ENCODE measurements at regions of chr3 and their contacts with region 1.

Region 1: GRCh38 chr3:100400780-100401673 is at the starts of genes LNP1 and TOMM70:
- DNase-seq: peak; percentile 97
- H3K4me3 Mint-ChIP-seq: peak within 1 kb of the TSS; percentile 92
- H3K27ac Mint-ChIP-seq: peak within 1 kb of the TSS; percentile 94
- H3K4me1 Mint-ChIP-seq: peaks cover 62% of the 10 kb centered on the region
- H3K27me3 Mint-ChIP-seq: no peaks in the 10 kb centered on the region
- total RNA-seq, gene LNP1: 1.9 to 2.3 TPM
- total RNA-seq, gene TOMM70: 44.9 to 47.1 TPM

Region 2: DNA sequence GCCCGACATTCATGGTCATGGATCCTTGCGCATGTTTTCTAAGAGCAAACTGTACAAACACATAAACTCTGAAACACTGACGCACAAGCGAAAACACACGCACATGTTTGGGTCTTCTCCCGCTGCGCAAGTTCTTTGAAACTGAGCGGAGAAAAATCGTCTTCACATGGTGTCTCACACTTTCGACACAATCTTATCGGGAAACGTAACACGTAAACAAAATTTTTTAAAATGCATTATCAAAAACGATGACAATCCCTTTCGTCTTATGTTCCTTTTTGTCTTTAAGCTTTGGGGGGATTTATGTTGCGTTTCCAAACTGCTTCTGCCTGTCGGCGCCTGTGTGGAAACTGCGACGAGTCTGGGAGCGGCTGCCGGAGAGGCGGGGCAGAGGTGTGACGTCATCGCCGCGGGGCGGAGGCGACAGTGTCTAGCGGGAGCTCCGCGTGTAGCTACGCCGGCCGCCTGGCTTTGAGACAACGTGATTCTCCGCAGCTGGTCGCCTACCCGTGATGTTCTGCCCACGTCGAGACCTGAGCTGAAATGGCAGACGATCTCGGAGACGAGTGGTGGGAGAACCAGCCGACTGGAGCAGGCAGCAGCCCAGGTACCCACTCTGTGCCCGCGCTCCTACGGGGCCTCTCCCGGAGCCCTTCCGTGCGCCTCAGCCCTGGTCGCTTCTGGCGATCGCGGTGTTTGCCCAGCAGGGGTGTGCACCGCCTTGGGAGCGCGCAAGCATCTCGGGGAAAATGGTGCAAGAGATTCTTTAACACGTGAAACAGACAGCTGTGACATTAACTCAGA is 583.4 kb before region 1 on chr3 and contains the start of gene CMSS1:
- CTCF ChIA-PET with region 1: no interaction called
- POLR2A ChIA-PET with region 1: no interaction called
- intact Hi-C with region 1: loop called (anchors 2 kb)
- DNase-seq: peak; percentile 96
- H3K4me3 Mint-ChIP-seq: peak within 1 kb of the TSS; percentile 84
- H3K27ac Mint-ChIP-seq: peak within 1 kb of the TSS; percentile 92
- H3K4me1 Mint-ChIP-seq: peaks cover 35% of the 10 kb centered on the region
- H3K27me3 Mint-ChIP-seq: no peaks in the 10 kb centered on the region
- total RNA-seq, gene CMSS1: 95.6 to 97.2 TPM

Region 3: DNA sequence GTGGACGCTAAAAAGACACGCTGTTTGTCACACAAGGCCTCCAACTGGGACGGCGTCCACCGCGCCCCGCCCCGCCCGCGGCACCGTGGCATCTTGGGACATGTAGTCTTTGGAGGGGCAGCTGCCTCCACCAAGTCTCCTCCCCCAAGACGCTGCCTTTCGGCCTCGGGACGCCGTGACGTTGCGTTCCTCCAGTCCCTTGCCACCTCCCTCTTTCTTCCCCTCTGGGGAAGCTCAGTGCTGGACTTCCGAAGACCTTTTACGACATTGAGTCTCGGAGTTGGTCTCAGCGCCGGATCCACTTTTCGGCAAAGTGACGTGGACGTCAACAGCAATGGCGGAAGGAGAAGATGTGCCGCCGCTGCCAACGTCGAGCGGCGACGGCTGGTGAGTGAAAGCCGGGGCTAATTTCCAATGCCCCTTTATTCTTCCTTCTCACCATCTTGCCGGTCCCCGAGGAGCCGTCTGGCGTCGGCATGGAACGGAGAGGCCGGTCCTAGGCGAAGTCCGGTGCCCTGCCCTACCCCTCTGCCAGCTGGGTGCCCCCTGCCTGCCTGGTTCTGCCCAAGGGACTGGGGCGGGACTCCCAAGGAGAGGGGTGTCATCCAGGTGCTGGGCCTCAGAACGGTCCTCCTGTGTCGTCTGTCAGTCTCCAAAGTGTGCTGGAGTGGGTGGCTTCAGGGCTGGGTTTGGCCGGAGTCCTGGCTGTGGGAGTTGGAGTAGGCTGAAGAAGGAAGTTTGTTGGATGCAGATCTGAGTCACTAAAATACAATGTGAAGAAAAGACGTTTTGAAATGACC is 140.1 kb before region 1 on chr3 and contains the start of gene TBC1D23:
- CTCF ChIA-PET with region 1: no interaction called
- POLR2A ChIA-PET with region 1: interaction called, 6 read pairs
- intact Hi-C with region 1: loop called (anchors 1 kb)
- DNase-seq: peak; percentile 99
- H3K4me3 Mint-ChIP-seq: peak within 1 kb of the TSS; percentile 92
- H3K27ac Mint-ChIP-seq: peak within 1 kb of the TSS; percentile 85
- H3K4me1 Mint-ChIP-seq: peaks cover 52% of the 10 kb centered on the region
- H3K27me3 Mint-ChIP-seq: no peaks in the 10 kb centered on the region
- total RNA-seq, gene TBC1D23: 17.8 to 22.7 TPM

Region 4: GRCh38 chr3:100334488-100335351 is 66.3 kb before region 1 on chr3 and contains the start of gene NIT2:
- CTCF ChIA-PET with region 1: no interaction called
- POLR2A ChIA-PET with region 1: interaction called, 14 read pairs
- intact Hi-C with region 1: loop called (anchors 1 kb)
- DNase-seq: peak; percentile 87
- H3K4me3 Mint-ChIP-seq: peak within 1 kb of the TSS; percentile 86
- H3K27ac Mint-ChIP-seq: peak within 1 kb of the TSS; percentile 84
- H3K4me1 Mint-ChIP-seq: peaks cover 21% of the 10 kb centered on the region
- H3K27me3 Mint-ChIP-seq: no peaks in the 10 kb centered on the region
- total RNA-seq, gene NIT2: 65.3 to 65.7 TPM

Region 5: GRCh38 chr3:100492059-100493006 is 91.3 kb after region 1 on chr3 and contains the start of gene TMEM45A:
- CTCF ChIA-PET with region 1: interaction called, 3 read pairs
- POLR2A ChIA-PET with region 1: no interaction called
- intact Hi-C with region 1: loop called (anchors 1 kb)
- DNase-seq: peak; percentile 90
- H3K4me3 Mint-ChIP-seq: peak within 1 kb of the TSS; percentile 82
- H3K27ac Mint-ChIP-seq: no peak within 1 kb of the TSS
- H3K4me1 Mint-ChIP-seq: peaks cover 9% of the 10 kb centered on the region
- H3K27me3 Mint-ChIP-seq: peaks cover 11% of the 10 kb centered on the region
- total RNA-seq, gene TMEM45A: 0.65 to 0.74 TPM

Region 6: DNA sequence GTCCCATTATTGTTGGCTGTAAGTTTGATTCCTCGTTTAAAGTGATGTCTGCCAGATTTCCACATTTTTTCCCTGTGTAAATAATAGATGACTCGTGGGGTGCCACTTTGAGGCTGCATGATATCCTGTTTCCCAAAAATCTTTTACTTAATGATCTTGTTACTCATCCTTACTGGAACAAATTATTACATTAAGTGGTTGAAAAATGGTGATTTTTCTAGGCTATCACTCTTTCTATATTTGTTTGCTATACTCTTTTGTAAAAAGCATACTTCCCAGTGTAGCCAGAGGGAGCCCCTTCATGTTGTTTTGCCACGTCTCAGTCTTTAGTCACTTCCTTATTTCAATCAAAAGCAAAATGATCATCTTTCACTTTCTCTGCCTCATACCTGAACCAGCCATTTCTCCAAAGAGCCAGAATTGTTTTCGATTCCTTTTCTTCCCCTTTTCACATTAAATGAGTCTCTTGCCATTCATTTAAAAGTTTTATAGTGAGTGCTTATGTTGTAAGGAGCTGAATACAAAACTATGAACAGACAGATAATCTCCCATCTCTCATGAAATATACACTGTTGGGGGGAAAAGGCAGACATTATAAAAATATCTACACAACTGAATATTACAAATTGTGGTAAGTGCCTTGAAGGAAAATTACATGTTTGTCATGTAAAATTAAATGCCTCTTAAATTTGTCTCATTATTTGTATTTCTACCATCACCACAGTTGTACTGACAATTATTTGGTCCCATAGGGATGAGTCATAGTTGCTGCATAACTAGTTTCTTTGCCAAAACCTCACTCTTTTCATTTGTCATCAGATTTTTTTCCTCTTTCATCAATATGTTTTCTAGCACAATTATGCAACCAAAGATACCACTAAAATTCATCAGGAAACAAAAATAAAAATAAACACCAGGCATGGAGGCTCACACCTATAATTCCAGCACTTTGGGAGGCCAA is 249.9 kb after region 1 on chr3:
- CTCF ChIA-PET with region 1: no interaction called
- POLR2A ChIA-PET with region 1: no interaction called
- intact Hi-C with region 1: loop called (anchors 2 kb)
- DNase-seq: peak; percentile 36
- H3K4me3 Mint-ChIP-seq: peak overlapping the region; percentile 18
- H3K27ac Mint-ChIP-seq: peak overlapping the region; percentile 41
- H3K4me1 Mint-ChIP-seq: peaks cover 15% of the 10 kb centered on the region
- H3K27me3 Mint-ChIP-seq: no peaks in the 10 kb centered on the region